Left ventricle myocardium superior (tissue), 1 donor: ENCODE measurements at regions of chr6 and their contacts with region 1.

Region 1: GRCh38 chr6:147506704-147507114 is 1.8 kb upstream of the SAMD5 start:
- DNase-seq: peak; percentile 87
- ATAC-seq: peak; percentile 86

Region 2: GRCh38 chr6:147651249-147652063 is 144.7 kb after region 1 on chr6:
- intact Hi-C with region 1: loop called (anchors 2 kb)
- DNase-seq: peak; percentile 52
- ATAC-seq: peak; percentile 93

Region 3: DNA sequence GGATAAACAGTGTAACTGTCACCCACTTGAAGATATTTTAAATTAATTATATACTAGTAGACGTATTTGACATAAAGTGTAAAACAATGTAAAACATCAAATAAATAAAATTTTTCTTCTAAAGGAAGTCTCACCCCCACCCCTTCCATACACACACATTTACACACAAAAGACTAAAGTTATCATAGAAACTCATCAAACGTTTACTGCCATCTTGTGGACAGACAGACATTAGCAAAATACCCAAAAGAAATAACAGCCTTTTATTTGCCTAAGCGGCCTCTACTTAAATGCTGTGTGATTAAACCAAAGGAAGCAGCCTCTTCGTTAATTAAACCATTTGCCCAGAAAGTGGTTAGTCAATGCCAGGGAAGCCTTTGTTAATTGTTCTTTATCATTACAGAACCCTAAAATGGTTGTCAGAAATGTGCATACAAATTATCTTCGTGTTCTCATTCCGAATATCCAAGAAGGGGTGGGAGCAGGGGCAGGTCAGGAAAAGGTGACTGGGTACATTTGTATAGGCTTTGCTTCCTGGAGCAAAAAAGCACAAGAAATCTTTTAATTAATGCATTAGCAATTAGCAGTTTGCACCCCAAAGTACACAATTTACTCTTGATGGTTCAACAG is 659.7 kb after region 1 on chr6:
- intact Hi-C with region 1: loop called (anchors 5 kb)
- DNase-seq: no peak
- ATAC-seq: no peak